ENCODE measurements at regions of chr5 and their contacts with region 1.

Region 1: GRCh38 chr5:76641514-76642120 is 18.4 kb upstream of the F2RL2 start:
- DNase-seq: peak; percentile 16 to 78 (median 67)
- ATAC-seq: peak; percentile 54
- H3K4me3 ChIP-seq: no peak overlapping the region
- H3K4me3 Mint-ChIP-seq: no peak overlapping the region
- H3K27ac ChIP-seq: no peak overlapping the region
- H3K27ac Mint-ChIP-seq: no peak overlapping the region
- H3K4me1 ChIP-seq: no peaks in the 10 kb centered on the region
- H3K4me1 Mint-ChIP-seq: no peaks in the 10 kb centered on the region
- H3K27me3 ChIP-seq: no peaks in the 10 kb centered on the region
- H3K27me3 Mint-ChIP-seq: no peaks in the 10 kb centered on the region
- CTCF ChIP-seq: peak; percentile 74

Region 2: GRCh38 chr5:76074487-76075065 is 567.0 kb before region 1 on chr5:
- CTCF ChIA-PET with region 1: no interaction called
- POLR2A ChIA-PET with region 1: no interaction called
- intact Hi-C with region 1: loop called in 1 of 2 experiments (anchors 1 kb)
- DNase-seq: peak in 3 of 9 experiments; percentile 19 to 54 (median 39)
- ATAC-seq: peak; percentile 59
- H3K4me3 ChIP-seq: no peak overlapping the region
- H3K4me3 Mint-ChIP-seq: no peak overlapping the region
- H3K27ac ChIP-seq: no peak overlapping the region
- H3K27ac Mint-ChIP-seq: no peak overlapping the region
- H3K4me1 ChIP-seq: no peaks in the 10 kb centered on the region
- H3K4me1 Mint-ChIP-seq: no peaks in the 10 kb centered on the region
- H3K27me3 ChIP-seq: no peaks in the 10 kb centered on the region
- H3K27me3 Mint-ChIP-seq: peaks cover 53% of the 10 kb centered on the region
- CTCF ChIP-seq: peak; percentile 43

Region 3: GRCh38 chr5:76337953-76338451 is 303.6 kb before region 1 on chr5:
- CTCF ChIA-PET with region 1: no interaction called
- POLR2A ChIA-PET with region 1: no interaction called
- intact Hi-C with region 1: loop called in 1 of 2 experiments (anchors 5 kb)
- DNase-seq: peak in 8 of 9 experiments; percentile 14 to 77 (median 40)
- ATAC-seq: peak; percentile 84
- H3K4me3 ChIP-seq: no peak overlapping the region
- H3K4me3 Mint-ChIP-seq: no peak overlapping the region
- H3K27ac ChIP-seq: no peak overlapping the region
- H3K27ac Mint-ChIP-seq: no peak overlapping the region
- H3K4me1 ChIP-seq: peaks cover 20% of the 10 kb centered on the region
- H3K4me1 Mint-ChIP-seq: peaks cover 28% of the 10 kb centered on the region
- H3K27me3 ChIP-seq: no peaks in the 10 kb centered on the region
- H3K27me3 Mint-ChIP-seq: no peaks in the 10 kb centered on the region
- CTCF ChIP-seq: peak; percentile 35

Region 4: DNA sequence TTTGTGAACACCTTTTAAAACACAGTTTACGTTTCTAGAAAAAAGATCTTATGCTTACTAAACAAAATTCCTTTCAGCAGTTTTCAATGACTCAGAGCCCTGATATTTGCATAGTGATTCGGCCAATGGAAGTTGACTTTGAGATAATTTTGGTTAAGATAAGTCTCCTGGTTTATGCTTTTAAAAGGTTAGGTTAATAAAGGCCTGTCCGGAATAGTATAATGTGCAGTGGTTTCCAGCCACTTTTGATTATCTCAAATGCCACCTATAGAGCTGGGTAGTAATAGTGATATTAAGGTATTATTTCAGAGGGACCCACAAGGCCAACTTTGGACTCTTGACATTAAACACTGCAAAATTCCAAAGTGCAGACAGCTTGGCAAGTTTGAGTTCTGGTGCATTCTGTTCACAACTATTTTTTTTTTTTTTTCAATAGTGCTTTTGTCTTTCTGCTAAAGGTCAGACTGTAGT is 104.5 kb before region 1 on chr5:
- CTCF ChIA-PET with region 1: no interaction called
- POLR2A ChIA-PET with region 1: no interaction called
- intact Hi-C with region 1: no loop called
- DNase-seq: no peak
- ATAC-seq: no peak
- H3K4me3 ChIP-seq: no peak overlapping the region
- H3K4me3 Mint-ChIP-seq: no peak overlapping the region
- H3K27ac ChIP-seq: no peak overlapping the region
- H3K27ac Mint-ChIP-seq: no peak overlapping the region
- H3K4me1 ChIP-seq: peaks cover 11% of the 10 kb centered on the region
- H3K4me1 Mint-ChIP-seq: peaks cover 70% of the 10 kb centered on the region
- H3K27me3 ChIP-seq: no peaks in the 10 kb centered on the region
- H3K27me3 Mint-ChIP-seq: no peaks in the 10 kb centered on the region
- CTCF ChIP-seq: no peak

Region 5: GRCh38 chr5:76601470-76601869 is 40.1 kb before region 1 on chr5:
- CTCF ChIA-PET with region 1: interaction called, 10 read pairs
- POLR2A ChIA-PET with region 1: no interaction called
- intact Hi-C with region 1: loop called (anchors 1 kb)
- DNase-seq: peak in 4 of 9 experiments; percentile 14 to 74 (median 42)
- ATAC-seq: peak; percentile 69
- H3K4me3 ChIP-seq: no peak overlapping the region
- H3K4me3 Mint-ChIP-seq: no peak overlapping the region
- H3K27ac ChIP-seq: no peak overlapping the region
- H3K27ac Mint-ChIP-seq: no peak overlapping the region
- H3K4me1 ChIP-seq: no peaks in the 10 kb centered on the region
- H3K4me1 Mint-ChIP-seq: no peaks in the 10 kb centered on the region
- H3K27me3 ChIP-seq: no peaks in the 10 kb centered on the region
- H3K27me3 Mint-ChIP-seq: no peaks in the 10 kb centered on the region
- CTCF ChIP-seq: peak; percentile 69

Region 6: DNA sequence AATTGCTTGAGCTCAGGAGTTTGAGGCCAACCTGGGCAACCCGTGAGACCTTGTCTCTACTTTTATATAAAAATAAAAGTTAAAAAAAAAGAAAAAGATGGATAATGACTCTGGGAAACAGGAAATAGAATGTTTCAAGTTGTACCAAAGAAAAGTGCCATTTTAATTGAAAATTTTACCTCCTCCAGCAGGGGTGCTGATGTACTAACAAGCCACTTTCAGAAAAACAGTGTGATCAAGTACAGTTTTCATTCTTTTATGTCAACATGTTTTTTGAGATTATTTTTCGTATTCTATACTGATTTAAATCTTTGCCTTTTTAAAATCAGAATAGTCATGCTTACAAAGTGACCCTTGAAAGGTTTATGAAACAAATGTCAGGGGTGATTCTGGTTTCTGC is 105.1 kb after region 1 on chr5:
- CTCF ChIA-PET with region 1: no interaction called
- POLR2A ChIA-PET with region 1: no interaction called
- intact Hi-C with region 1: no loop called
- DNase-seq: no peak
- ATAC-seq: no peak
- H3K4me3 ChIP-seq: no peak overlapping the region
- H3K4me3 Mint-ChIP-seq: no peak overlapping the region
- H3K27ac ChIP-seq: no peak overlapping the region
- H3K27ac Mint-ChIP-seq: no peak overlapping the region
- H3K4me1 ChIP-seq: no peaks in the 10 kb centered on the region
- H3K4me1 Mint-ChIP-seq: no peaks in the 10 kb centered on the region
- H3K27me3 ChIP-seq: no peaks in the 10 kb centered on the region
- H3K27me3 Mint-ChIP-seq: no peaks in the 10 kb centered on the region
- CTCF ChIP-seq: no peak

Measured in CD8-positive, alpha-beta T cell (primary cell).